ENCODE measurements at regions of chr12 and their contacts with region 1.

Region 1: DNA sequence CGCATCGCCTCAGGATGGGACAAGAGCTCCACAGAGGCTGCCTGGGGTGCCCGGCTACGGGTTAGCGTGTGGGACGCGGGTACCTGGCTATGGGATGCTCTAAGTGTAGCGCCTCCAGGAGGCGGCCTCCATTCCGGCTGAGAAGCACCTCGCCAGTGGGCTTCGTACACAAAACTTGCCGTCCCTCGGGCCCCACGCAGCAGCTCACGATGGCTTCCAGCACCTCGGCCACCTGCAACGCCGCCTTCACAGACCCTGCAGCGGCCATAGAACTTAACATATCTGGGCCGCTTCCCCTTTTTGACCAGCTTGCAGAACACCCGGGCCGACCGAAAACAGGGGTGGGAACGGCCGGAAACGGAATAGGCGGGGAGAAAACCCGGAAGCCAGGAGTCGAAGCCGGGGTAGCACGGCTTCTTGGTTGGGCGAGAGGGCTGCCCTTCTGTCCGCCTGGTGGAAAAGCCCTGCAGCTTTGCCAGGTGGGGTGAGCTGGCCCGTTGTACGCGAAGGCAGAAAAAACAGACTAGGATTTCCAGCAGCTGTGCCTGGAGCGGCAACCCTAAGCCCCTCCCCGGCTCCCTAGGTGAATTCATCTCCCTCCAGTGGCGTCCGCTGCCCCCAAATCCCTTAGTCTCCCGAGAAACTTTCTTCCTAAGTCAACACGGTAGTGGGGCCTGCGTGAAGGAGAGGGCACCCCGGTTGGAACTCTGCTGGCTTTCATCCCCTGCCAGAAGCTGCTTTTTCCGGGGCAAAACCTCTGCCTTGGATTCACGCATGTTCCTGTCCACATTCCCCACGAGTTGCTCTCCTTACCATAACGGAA is at the start of gene BBS10:
- DNase-seq: peak; percentile 73 to 89
- H3K4me3 ChIP-seq: peak within 1 kb of the TSS; percentile 85 to 89 (median 85)
- H3K27ac ChIP-seq: peak within 1 kb of the TSS; percentile 89
- H3K4me1 ChIP-seq: peaks cover 0 to 2% (median 0%) of the 10 kb centered on the region in 4 experiments; a peak in 2 of 7 replicates
- H3K27me3 ChIP-seq: no peaks in the 10 kb centered on the region
- CTCF ChIP-seq: peak; percentile 30 to 52 (median 51); a peak in 3 of 4 replicates
- EP300 ChIP-seq: no peak
- POLR2A ChIP-seq: peak; percentile 52 to 87
- RAD21 ChIP-seq: peak; percentile 44 to 53
- total RNA-seq, gene BBS10: 9.2 and 10.0 TPM in 2 replicates

Region 2: GRCh38 chr12:76250256-76250655 is 98.0 kb before region 1 on chr12:
- CTCF ChIA-PET with region 1: no interaction called
- POLR2A ChIA-PET with region 1: no interaction called
- DNase-seq: no peak
- H3K4me3 ChIP-seq: no peak overlapping the region
- H3K27ac ChIP-seq: no peak overlapping the region
- H3K4me1 ChIP-seq: peaks cover 3 to 8% (median 6%) of the 10 kb centered on the region in 4 experiments; a peak in 5 of 7 replicates
- H3K27me3 ChIP-seq: no peaks in the 10 kb centered on the region
- CTCF ChIP-seq: no peak
- EP300 ChIP-seq: no peak
- POLR2A ChIP-seq: no peak
- RAD21 ChIP-seq: no peak

Region 3: DNA sequence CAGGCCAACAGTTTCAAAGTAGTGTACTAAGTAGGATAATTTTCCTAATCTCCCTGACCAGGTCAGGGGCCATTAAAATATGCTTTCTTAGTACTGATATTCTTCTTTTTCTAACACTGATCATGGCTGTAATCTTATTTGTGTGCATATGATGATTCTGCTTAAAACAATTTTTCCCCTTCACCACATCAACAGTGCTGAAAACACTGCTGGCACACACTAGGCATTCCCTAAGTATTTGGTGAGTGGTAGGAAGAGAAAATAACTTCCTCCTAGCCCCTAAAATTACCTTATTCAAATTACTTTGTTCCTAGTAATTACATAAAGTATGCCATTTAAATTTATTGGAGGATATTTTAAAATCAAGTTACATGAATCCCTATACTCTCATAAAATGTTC is 49.8 kb after region 1 on chr12:
- CTCF ChIA-PET with region 1: no interaction called
- POLR2A ChIA-PET with region 1: no interaction called
- DNase-seq: no peak
- H3K4me3 ChIP-seq: no peak overlapping the region
- H3K27ac ChIP-seq: no peak overlapping the region
- H3K4me1 ChIP-seq: no peaks in the 10 kb centered on the region
- H3K27me3 ChIP-seq: no peaks in the 10 kb centered on the region
- CTCF ChIP-seq: no peak
- EP300 ChIP-seq: no peak
- POLR2A ChIP-seq: no peak
- RAD21 ChIP-seq: no peak

Region 4: DNA sequence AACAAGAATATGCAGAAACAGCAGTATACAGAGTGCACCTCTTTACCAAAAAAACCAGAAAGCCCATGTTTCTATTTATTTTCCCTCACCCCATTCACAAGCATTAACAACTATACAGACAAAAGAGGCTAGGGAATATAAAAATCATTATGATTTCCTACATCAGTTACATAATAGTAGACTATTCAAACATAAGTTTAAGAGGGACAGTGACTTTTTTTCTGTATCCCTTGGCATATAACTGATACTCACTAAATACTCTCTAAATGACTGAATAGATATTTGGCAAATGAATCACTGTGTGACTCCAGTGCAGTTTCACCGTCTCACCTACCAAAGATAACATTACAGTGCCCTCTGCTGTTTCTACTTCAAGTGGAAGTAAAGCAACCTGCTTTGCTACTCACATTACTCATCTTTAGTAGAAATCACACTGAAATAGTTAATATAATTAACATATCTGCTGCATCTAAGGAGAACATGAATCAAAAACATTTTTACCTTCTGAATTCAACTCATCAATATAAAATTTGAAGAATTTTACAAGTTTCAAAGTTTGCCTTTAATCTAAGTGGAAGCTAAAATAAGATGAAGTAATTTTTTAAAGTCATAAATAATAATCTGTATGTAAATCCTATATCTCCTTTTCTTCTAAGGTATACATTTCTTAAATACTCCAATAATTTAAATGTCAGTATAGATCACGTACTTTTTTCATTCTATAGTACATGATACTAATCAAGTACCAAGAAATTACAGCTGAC is 107.5 kb after region 1 on chr12:
- CTCF ChIA-PET with region 1: interaction called, 14 read pairs
- POLR2A ChIA-PET with region 1: no interaction called
- DNase-seq: no peak
- H3K4me3 ChIP-seq: no peak overlapping the region
- H3K27ac ChIP-seq: no peak overlapping the region
- H3K4me1 ChIP-seq: no peaks in the 10 kb centered on the region
- H3K27me3 ChIP-seq: no peaks in the 10 kb centered on the region
- CTCF ChIP-seq: peak in 2 of 3 experiments; percentile 55 to 63; a peak in 3 of 4 replicates
- EP300 ChIP-seq: no peak
- POLR2A ChIP-seq: no peak
- RAD21 ChIP-seq: peak; percentile 83

Region 5: DNA sequence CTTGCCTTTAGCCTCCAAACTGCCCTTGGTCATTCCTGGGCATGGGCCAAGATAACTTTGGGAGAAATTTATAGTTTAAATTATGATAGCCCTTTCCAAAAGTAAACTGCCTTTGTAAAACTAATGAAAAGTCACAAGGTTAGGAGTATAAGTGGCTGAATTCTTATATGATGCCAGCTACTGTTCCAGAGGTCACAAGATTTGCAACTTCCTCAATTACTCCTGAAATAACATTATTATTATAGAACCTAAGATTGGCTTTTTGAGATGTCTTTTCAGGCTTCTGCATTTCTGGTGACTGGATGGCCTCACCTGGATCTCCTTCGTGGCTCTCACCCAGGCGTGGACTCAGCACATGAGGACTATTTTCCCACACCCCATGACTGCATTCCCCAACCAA is 156.3 kb after region 1 on chr12:
- CTCF ChIA-PET with region 1: no interaction called
- POLR2A ChIA-PET with region 1: no interaction called
- DNase-seq: no peak
- H3K4me3 ChIP-seq: no peak overlapping the region
- H3K27ac ChIP-seq: no peak overlapping the region
- H3K4me1 ChIP-seq: no peaks in the 10 kb centered on the region
- H3K27me3 ChIP-seq: no peaks in the 10 kb centered on the region
- CTCF ChIP-seq: no peak
- EP300 ChIP-seq: no peak
- POLR2A ChIP-seq: no peak
- RAD21 ChIP-seq: no peak